ENCODE measurements at regions of chr16 and their contacts with region 1.

Region 1: DNA sequence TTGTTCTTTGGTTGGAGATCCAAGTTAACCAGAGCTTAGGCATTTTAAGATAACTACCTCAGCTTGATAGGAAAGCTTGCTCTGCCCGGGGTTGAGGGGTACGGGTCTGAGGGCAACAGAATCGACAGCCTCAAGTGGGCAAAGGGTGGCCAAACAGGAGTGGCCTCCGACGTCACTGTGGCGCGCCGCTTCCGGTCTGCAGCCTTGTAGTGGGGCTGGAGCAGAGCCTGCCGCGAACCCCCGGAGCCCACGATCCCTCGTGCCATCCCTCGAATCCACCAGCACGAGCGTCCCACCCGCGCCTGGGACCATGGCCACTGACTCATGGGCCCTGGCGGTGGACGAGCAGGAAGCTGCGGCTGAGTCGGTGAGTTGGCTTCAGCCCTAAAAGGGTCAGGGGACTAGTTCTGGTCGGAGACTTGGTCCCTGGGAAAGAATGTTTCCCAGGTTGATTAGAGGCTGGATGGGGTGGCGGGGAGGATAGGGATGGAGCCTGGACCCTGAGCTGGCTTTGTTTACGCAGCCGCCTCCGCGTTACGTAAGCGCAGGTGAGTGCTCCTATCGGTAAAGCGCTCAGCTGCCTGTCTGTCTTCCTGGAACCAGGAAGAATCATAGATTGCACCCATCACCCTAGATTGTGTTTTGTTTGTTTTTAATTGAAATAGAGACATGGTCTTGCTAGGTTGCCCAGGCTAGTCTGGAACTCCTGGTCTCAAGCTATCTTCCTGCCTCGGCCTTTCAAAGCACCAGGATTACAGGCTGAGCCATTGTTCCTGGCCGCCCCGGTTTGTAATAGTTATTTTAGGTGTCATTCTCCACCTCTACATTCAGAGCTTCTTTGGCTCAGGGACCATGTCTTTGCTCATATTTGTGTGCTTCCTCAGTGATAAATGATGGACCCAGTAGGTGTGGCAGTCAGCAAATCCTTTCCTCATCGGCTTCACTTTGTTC is at the start of gene DDX19B:
- DNase-seq: peak; percentile 58
- H3K4me3 ChIP-seq: peak within 1 kb of the TSS; percentile 76 to 85 (median 84)
- H3K27ac ChIP-seq: peak within 1 kb of the TSS; percentile 87
- H3K4me1 ChIP-seq: peaks cover 5% of the 10 kb centered on the region
- H3K27me3 ChIP-seq: no peaks in the 10 kb centered on the region
- CTCF ChIP-seq: peak in 1 of 2 donors; percentile 10
- total RNA-seq, gene DDX19B: 25.3 to 27.3 TPM

Region 2: DNA sequence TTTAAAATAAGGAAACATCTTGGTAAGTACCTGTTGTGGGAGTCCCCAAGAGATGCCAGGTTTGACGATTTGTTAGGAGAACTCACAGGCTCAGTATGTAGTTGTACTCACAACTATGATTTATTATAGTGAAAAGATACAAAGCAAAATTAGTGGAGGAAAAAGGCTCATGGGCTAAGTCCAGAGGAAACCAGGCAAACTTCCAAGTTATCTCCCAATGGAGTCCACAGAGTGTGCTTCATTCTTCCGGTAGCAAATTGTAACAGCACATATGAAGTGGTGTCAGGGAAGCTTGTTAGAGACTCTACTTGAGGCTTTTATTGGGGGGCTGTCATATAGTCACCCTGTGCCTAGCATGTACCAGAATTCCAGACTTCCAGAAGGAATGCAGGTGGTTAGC is 49.7 kb after region 1 on chr16:
- CTCF ChIA-PET with region 1: no interaction called
- dilution Hi-C with region 1: loop called (anchors 5 kb)
- in situ Hi-C with region 1: no loop called
- intact Hi-C with region 1: no loop called
- DNase-seq: no peak
- H3K4me3 ChIP-seq: no peak overlapping the region
- H3K27ac ChIP-seq: no peak overlapping the region
- H3K4me1 ChIP-seq: peaks cover 11% of the 10 kb centered on the region
- H3K27me3 ChIP-seq: no peaks in the 10 kb centered on the region
- CTCF ChIP-seq: no peak

Region 3: GRCh38 chr16:70750893-70751475 is 451.7 kb after region 1 on chr16:
- CTCF ChIA-PET with region 1: no interaction called
- dilution Hi-C with region 1: no loop called
- in situ Hi-C with region 1: no loop called
- intact Hi-C with region 1: no loop called
- DNase-seq: no peak
- H3K4me3 ChIP-seq: no peak overlapping the region
- H3K27ac ChIP-seq: no peak overlapping the region
- H3K4me1 ChIP-seq: peaks cover 25% of the 10 kb centered on the region
- H3K27me3 ChIP-seq: no peaks in the 10 kb centered on the region
- CTCF ChIP-seq: no peak